Mammary epithelial cell (primary cell): ENCODE measurements at regions of chr17 and their contacts with region 1.

Region 1: GRCh38 chr17:35387496-35387895 is 14.1 kb upstream of the SLFN11 start:
- DNase-seq: no peak
- H3K4me3 ChIP-seq: no peak overlapping the region
- H3K27ac ChIP-seq: no peak overlapping the region
- H3K4me1 ChIP-seq: no peaks in the 10 kb centered on the region
- H3K27me3 ChIP-seq: peaks cover 9% of the 10 kb centered on the region
- CTCF ChIP-seq: no peak

Region 2: DNA sequence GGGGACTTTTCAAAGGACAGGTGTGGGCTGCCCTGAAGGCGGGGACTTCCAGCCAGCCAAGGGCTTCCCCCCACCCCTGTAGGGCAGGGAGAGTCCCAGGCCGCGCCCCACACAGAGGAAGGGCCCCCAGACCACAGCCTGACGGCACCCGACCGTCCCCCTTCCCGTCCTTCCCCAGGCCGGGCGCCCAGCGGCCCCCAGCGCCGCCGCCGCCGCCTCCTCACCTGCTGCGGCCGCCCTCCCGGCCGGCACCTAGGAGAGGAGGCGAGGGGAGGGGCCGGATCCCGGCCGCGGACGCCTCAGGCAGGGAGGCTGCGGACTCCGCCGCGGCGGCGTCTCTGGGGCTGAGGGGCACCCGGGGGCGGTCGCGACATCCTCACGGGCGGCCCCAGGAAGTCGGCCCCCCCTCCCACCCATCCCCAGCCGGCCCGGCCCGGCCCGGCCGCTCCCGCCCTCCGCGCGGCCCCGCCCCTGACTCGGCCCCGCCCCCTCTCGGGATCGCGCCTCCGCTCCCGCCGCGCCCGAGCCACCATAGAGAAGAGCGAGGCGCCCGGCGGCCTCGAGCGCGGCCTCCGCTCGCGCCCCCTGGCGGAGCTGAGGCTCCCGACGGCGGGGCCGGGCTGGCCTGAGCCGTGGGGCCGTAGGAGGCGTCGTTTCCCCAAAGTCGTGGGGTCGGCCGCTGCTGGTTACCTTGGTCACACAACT is 298.5 kb before region 1 on chr17:
- CTCF ChIA-PET with region 1: no interaction called
- dilution Hi-C with region 1: no loop called
- in situ Hi-C with region 1: no loop called
- intact Hi-C with region 1: no loop called
- DNase-seq: peak; percentile 82
- H3K4me3 ChIP-seq: peak overlapping the region; percentile 57 to 80 (median 59)
- H3K27ac ChIP-seq: peak overlapping the region; percentile 84
- H3K4me1 ChIP-seq: peaks cover 44% of the 10 kb centered on the region
- H3K27me3 ChIP-seq: no peaks in the 10 kb centered on the region
- CTCF ChIP-seq: peak; percentile 49 to 66

Region 3: GRCh38 chr17:35322749-35323148 is 64.7 kb before region 1 on chr17:
- CTCF ChIA-PET with region 1: no interaction called
- dilution Hi-C with region 1: loop called (anchors 5 kb)
- in situ Hi-C with region 1: no loop called
- intact Hi-C with region 1: no loop called
- DNase-seq: no peak
- H3K4me3 ChIP-seq: no peak overlapping the region
- H3K27ac ChIP-seq: no peak overlapping the region
- H3K4me1 ChIP-seq: no peaks in the 10 kb centered on the region
- H3K27me3 ChIP-seq: peaks cover 3% of the 10 kb centered on the region
- CTCF ChIP-seq: no peak